ENCODE measurements at regions of chr15 and their contacts with region 1.

Region 1: GRCh38 chr15:90286678-90287077 is 21.2 kb downstream of the NGRN start:
- DNase-seq: peak; percentile 35 to 39
- H3K4me3 ChIP-seq: no peak overlapping the region
- H3K27ac ChIP-seq: no peak overlapping the region
- H3K4me1 ChIP-seq: no peaks in the 10 kb centered on the region
- H3K27me3 ChIP-seq: no peaks in the 10 kb centered on the region
- CTCF ChIP-seq: peak; percentile 66

Region 2: GRCh38 chr15:89591834-89592233 is 694.8 kb before region 1 on chr15:
- CTCF ChIA-PET with region 1: no interaction called
- POLR2A ChIA-PET with region 1: no interaction called
- intact Hi-C with region 1: no loop called
- DNase-seq: no peak
- H3K4me3 ChIP-seq: no peak overlapping the region
- H3K27ac ChIP-seq: no peak overlapping the region
- H3K4me1 ChIP-seq: no peaks in the 10 kb centered on the region
- H3K27me3 ChIP-seq: no peaks in the 10 kb centered on the region
- CTCF ChIP-seq: no peak

Region 3: DNA sequence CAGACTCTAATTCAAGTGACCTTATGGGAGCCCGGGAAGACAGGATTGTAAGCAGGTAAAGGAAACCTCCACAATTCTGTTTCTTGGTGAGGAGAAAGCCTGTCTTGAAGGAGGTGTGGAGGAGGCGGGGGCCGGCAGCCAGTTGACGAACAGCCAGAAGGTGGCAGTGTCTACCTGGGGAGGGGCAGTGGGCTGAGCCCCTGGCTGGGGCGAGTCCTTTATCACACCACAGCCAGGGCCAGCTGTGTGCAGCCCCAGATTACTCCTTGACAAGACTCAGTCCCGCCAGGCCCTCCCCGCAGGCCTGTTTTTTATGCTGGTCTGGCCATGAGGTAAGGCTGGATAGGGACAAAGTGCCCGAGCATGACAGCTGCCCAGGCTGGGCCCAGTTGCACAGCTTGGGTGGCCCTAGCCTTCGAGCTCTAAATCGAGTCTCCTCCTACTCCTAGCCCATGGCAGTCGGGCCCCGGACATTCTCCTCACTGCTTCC is 143.5 kb before region 1 on chr15:
- CTCF ChIA-PET with region 1: interaction called, 7 read pairs
- POLR2A ChIA-PET with region 1: no interaction called
- intact Hi-C with region 1: loop called (anchors 1 kb)
- DNase-seq: peak; percentile 61 to 79
- H3K4me3 ChIP-seq: no peak overlapping the region
- H3K27ac ChIP-seq: no peak overlapping the region
- H3K4me1 ChIP-seq: no peaks in the 10 kb centered on the region; the same call in 1 of the 2 replicates
- H3K27me3 ChIP-seq: no peaks in the 10 kb centered on the region
- CTCF ChIP-seq: peak; percentile 86

Region 4: GRCh38 chr15:90154861-90155626 is 131.6 kb before region 1 on chr15:
- CTCF ChIA-PET with region 1: interaction called, 10 read pairs
- POLR2A ChIA-PET with region 1: no interaction called
- intact Hi-C with region 1: no loop called
- DNase-seq: peak in 1 of 2 experiments; percentile 81
- H3K4me3 ChIP-seq: no peak overlapping the region
- H3K27ac ChIP-seq: no peak overlapping the region
- H3K4me1 ChIP-seq: peaks cover 48% of the 10 kb centered on the region
- H3K27me3 ChIP-seq: no peaks in the 10 kb centered on the region
- CTCF ChIP-seq: no peak

Region 5: GRCh38 chr15:90201130-90201949 is 85.3 kb before region 1 on chr15 and contains the start of gene SEMA4B:
- CTCF ChIA-PET with region 1: no interaction called
- POLR2A ChIA-PET with region 1: interaction called, 14 read pairs
- intact Hi-C with region 1: no loop called
- DNase-seq: peak; percentile 46 to 65
- H3K4me3 ChIP-seq: peak within 1 kb of the TSS; percentile 71
- H3K27ac ChIP-seq: peak within 1 kb of the TSS; percentile 51
- H3K4me1 ChIP-seq: peaks cover 57% of the 10 kb centered on the region
- H3K27me3 ChIP-seq: no peaks in the 10 kb centered on the region
- CTCF ChIP-seq: no peak
- total RNA-seq, gene SEMA4B: 63.6 and 70.7 TPM in 2 replicates

Region 6: DNA sequence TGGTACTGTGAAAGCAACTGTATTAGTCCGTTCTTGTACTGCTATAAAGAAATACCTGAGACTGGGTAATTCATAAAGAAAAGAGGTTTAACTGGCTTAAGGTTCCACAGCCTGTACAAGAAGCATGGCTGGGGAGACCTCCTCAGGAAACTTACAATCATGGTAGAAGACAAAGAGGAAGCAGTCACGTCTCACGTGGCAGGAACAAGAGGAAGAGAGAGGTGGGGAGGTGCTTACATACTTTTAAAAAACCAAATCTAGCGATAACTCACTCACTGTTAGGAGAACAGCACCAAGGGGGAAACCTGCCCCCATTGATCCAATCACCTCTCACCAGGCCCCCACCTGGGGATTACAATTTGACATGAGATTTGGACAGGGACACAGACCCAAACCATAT is 150.3 kb after region 1 on chr15:
- CTCF ChIA-PET with region 1: no interaction called
- POLR2A ChIA-PET with region 1: no interaction called
- intact Hi-C with region 1: no loop called
- DNase-seq: no peak
- H3K4me3 ChIP-seq: no peak overlapping the region
- H3K27ac ChIP-seq: no peak overlapping the region
- H3K4me1 ChIP-seq: no peaks in the 10 kb centered on the region
- H3K27me3 ChIP-seq: no peaks in the 10 kb centered on the region
- CTCF ChIP-seq: no peak

Measured in PC-9 (cell line).